PC-9 (cell line): ENCODE measurements at regions of chr14 and their contacts with region 1.

Region 1: DNA sequence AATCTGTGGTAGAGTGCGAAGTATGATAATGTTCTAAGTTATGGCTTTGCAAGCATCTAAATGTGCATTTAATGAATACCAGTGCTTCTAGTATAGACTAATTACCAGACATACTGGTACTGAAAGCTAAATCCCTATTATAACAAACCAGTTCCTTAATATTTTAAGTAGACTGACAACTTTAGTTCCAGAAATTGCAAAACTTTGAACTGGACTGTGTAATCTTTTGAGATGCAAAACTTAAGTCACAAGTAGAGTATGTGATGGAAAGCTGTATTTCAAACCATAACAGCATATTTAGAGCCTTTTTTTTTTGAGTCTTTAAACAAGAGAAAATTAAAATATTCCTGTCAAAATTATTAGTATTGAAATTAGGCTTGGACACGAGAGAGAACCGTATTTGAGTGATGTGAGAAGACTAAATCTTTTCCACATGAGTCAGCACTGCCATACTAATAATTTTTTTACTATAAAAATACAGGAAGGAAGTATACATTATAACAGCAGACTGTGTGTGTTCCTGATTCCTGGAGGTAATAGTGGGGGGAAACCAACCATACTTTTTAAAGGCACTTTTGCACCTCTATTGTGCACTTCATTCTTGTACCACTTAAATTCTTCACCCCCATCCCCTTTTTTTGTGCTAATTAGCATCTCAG is 45.5 kb downstream of the PPM1A start:
- DNase-seq: no peak
- H3K4me3 ChIP-seq: no peak overlapping the region
- H3K27ac ChIP-seq: no peak overlapping the region
- H3K4me1 ChIP-seq: no peaks in the 10 kb centered on the region
- H3K27me3 ChIP-seq: no peaks in the 10 kb centered on the region
- CTCF ChIP-seq: no peak

Region 2: DNA sequence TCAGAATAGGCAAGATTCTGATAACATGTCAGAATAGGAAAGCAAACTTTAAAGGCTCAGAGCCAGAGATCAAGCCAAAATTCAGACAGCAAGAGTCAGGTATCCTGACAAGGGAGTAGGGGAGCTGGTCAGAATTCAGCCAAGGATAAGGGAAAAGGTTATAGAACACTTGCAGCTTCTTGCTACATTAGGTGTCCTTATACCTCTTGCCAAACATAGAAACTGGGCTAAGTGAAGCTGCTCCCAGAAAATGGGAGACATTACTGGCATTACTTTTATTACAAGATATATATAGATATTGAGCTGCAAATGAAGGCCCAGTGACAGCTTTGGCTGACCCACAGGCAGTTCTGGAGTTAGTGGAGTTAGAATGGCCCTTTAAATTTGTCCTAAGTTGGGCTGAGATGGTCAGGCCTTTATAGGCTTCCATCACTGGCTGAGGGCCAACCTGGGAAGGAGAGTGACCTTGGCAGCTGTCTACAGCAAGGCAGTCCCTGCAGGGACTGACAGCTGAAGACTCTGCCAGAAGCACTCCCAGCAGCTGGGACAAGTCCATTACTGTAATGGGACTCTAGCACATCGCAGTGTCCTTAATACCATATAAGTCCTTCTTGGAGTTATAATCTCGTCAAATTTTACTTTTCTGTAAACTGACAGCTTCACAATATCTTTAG is 291.6 kb before region 1 on chr14:
- CTCF ChIA-PET with region 1: no interaction called
- POLR2A ChIA-PET with region 1: interaction called, 10 read pairs
- intact Hi-C with region 1: no loop called
- DNase-seq: no peak
- H3K4me3 ChIP-seq: no peak overlapping the region
- H3K27ac ChIP-seq: no peak overlapping the region
- H3K4me1 ChIP-seq: no peaks in the 10 kb centered on the region
- H3K27me3 ChIP-seq: no peaks in the 10 kb centered on the region
- CTCF ChIP-seq: no peak

Region 3: DNA sequence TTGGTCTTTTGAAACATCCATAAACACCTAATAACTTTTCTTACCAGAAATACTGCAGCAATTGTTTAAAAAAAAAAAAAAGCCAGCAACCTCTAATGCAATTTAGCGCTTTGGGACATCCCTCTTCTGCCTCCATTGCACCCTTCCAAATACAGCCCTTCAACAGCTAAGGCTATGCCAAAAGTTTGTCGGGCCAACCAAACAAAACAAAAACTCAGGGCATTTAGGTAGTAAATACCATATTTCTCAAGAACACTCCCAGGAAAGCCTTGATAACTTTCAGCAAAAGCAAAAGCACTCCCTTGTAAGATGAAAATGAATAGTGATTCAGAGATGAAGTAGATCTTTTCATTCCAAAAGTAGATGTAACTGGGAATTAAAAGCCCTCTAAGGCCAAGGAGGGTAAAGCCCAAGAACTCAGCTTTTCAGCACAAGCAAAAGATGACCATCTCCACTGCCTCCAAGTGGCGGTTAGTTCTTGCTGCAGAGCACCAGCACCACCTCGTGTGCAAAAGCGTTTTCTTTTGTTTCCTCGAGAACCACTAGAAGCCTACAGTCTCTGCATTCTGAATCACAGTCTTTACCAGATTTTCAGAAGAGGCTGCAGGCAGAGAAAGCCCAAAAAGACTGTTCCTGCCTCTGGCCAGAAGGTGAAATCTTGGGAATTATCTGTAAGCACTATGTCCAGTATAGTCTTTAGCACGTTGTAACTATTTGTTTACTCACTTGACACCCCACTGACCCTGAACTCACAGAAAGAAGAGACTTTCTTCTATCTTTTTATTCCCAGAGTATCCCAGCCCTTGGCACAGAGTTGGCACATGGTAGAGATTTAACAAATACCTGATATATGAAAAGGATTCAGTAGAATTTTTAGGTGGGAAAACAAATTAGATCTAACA is 267.6 kb after region 1 on chr14:
- CTCF ChIA-PET with region 1: no interaction called
- POLR2A ChIA-PET with region 1: no interaction called
- intact Hi-C with region 1: no loop called
- DNase-seq: peak; percentile 36 to 59
- H3K4me3 ChIP-seq: no peak overlapping the region
- H3K27ac ChIP-seq: no peak overlapping the region
- H3K4me1 ChIP-seq: no peaks in the 10 kb centered on the region
- H3K27me3 ChIP-seq: no peaks in the 10 kb centered on the region
- CTCF ChIP-seq: peak; percentile 79